HepG2 (cell line): ENCODE measurements at regions of chr6 and their contacts with region 1.

Region 1: GRCh38 chr6:31822036-31822821 is 5.3 kb upstream of the HSPA1B start:
- DNase-seq: peak; percentile 67
- ATAC-seq: peak; percentile 47
- H3K4me3 ChIP-seq: peak overlapping the region; percentile 67 to 91 (median 87)
- H3K27ac ChIP-seq: peak overlapping the region; percentile 86
- H3K4me1 ChIP-seq: peaks cover 67% of the 10 kb centered on the region
- H3K27me3 ChIP-seq: no peaks in the 10 kb centered on the region
- CTCF ChIP-seq: 0 out of 2 replicates have a peak, but pooled peaks have one; percentile 13
- EP300 ChIP-seq: peak in 1 of 2 experiments; percentile 65; a peak in 2 of 4 replicates
- POLR2A ChIP-seq: peak in 1 of 2 experiments; percentile 33; a peak in 2 of 4 replicates
- RAD21 ChIP-seq: no peak

Region 2: DNA sequence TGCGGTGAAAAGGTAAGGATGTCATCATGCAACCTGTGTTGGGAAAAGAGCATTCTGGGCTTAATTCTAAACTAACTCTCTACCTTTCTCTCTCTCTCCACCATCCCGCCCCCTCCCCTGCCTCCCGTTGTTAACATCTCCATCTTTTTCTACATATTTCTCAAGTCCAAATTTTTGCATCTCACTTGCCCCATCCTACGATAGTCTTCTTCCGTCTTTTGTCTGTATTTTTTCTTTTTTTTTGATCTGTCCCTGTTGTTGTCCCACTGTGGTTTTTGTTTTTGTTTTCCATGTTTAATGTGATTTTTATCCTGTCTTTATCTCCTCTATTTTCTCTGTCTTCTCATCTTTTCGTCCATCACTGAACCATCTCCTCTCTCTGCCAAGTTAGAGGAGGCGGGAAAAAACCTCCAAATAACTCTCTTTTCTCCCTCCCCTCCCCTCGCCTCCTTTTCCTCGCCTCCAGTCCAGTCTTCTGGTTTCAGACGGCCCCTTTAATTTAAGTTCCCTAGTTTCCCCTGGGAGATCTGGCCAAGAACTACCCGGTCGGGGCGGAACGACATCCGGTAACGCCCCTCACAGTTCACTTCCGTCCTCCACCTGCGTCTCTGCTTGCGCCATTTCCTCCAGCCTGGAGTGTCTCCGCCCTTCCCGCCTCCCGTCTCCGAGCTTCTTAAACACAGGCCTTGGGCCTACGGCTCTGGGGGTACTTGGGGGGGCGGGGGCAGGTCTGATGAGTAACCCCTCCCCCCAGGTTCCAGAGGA is 275.1 kb before region 1 on chr6 and contains the start of gene NFKBIL1:
- CTCF ChIA-PET with region 1: no interaction called
- POLR2A ChIA-PET with region 1: no interaction called
- in situ Hi-C with region 1: no loop called
- intact Hi-C with region 1: no loop called
- DNase-seq: peak; percentile 93
- ATAC-seq: peak; percentile 93
- H3K4me3 ChIP-seq: peak within 1 kb of the TSS; percentile 74 to 93 (median 76)
- H3K27ac ChIP-seq: peak within 1 kb of the TSS; percentile 64
- H3K4me1 ChIP-seq: peaks cover 43% of the 10 kb centered on the region
- H3K27me3 ChIP-seq: no peaks in the 10 kb centered on the region; a peak in 1 of 5 replicates
- CTCF ChIP-seq: peak; percentile 36; the same call in 1 of the 2 replicates
- EP300 ChIP-seq: peak in 1 of 2 experiments; percentile 37; a peak in 1 of 4 replicates
- POLR2A ChIP-seq: peak; percentile 37 to 63; a peak in 3 of 4 replicates
- RAD21 ChIP-seq: peak; percentile 12; the same call in 1 of the 2 replicates
- total RNA-seq, gene NFKBIL1: 13.9 and 19.5 TPM in 2 replicates

Region 3: GRCh38 chr6:31806465-31807272 is 15.6 kb before region 1 on chr6 and contains the start of gene LSM2:
- CTCF ChIA-PET with region 1: no interaction called
- POLR2A ChIA-PET with region 1: interaction called, 107 read pairs
- in situ Hi-C with region 1: no loop called
- intact Hi-C with region 1: no loop called
- DNase-seq: peak; percentile 96
- ATAC-seq: peak; percentile 92
- H3K4me3 ChIP-seq: peak within 1 kb of the TSS; percentile 82 to 90 (median 84)
- H3K27ac ChIP-seq: peak within 1 kb of the TSS; percentile 94
- H3K4me1 ChIP-seq: peaks cover 37% of the 10 kb centered on the region
- H3K27me3 ChIP-seq: no peaks in the 10 kb centered on the region
- CTCF ChIP-seq: peak; percentile 89
- EP300 ChIP-seq: peak in 1 of 2 experiments; percentile 43; a peak in 2 of 4 replicates
- POLR2A ChIP-seq: peak; percentile 75 to 89
- RAD21 ChIP-seq: peak; percentile 69
- total RNA-seq, gene LSM2: 90.5 and 93.7 TPM in 2 replicates

Region 4: GRCh38 chr6:32622545-32623401 is 800.5 kb after region 1 on chr6:
- CTCF ChIA-PET with region 1: no interaction called
- POLR2A ChIA-PET with region 1: no interaction called
- in situ Hi-C with region 1: no loop called
- intact Hi-C with region 1: no loop called
- DNase-seq: peak; percentile 28
- ATAC-seq: peak; percentile 81
- H3K4me3 ChIP-seq: no peak overlapping the region
- H3K27ac ChIP-seq: no peak overlapping the region
- H3K4me1 ChIP-seq: no peaks in the 10 kb centered on the region
- H3K27me3 ChIP-seq: peaks cover 0 to 3% of the 10 kb centered on the region in 2 experiments; a peak in 2 of 5 replicates
- CTCF ChIP-seq: peak; percentile 58
- EP300 ChIP-seq: no peak
- POLR2A ChIP-seq: no peak
- RAD21 ChIP-seq: no peak